K562 (cell line): ENCODE measurements at regions of chr6 and their contacts with region 1.

Region 1: DNA sequence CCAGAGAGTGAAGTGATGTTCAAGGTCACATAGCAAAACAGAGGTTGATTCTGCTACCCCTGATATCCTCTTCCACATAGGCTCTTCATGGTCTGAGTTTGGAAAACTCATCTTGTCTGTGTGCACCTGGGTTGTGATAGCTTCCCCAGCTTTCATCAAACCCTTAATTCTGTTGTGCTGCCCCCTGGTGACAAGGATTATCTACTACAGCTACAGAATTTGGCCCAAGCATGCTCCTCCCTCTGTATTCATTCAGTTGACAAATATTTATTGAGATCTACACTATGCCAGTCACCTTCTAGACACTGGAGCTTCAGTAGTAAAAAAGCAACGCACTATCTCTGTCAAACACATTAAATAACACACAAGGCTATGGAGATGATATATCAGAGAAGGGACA is 50.4 kb downstream of the SMPDL3A start:
- DNase-seq: peak; percentile 66 to 72 (median 70)
- ATAC-seq: peak; percentile 90
- H3K4me3 ChIP-seq: no peak overlapping the region
- H3K27ac ChIP-seq: no peak overlapping the region
- H3K4me1 ChIP-seq: no peaks in the 10 kb centered on the region
- H3K27me3 ChIP-seq: peaks cover 4 to 9% of the 10 kb centered on the region in 2 experiments; a peak in 3 of 5 replicates
- CTCF ChIP-seq: peak; percentile 61 to 76 (median 61)
- EP300 ChIP-seq: no peak
- POLR2A ChIP-seq: no peak
- RAD21 ChIP-seq: peak; percentile 44 to 67

Region 2: DNA sequence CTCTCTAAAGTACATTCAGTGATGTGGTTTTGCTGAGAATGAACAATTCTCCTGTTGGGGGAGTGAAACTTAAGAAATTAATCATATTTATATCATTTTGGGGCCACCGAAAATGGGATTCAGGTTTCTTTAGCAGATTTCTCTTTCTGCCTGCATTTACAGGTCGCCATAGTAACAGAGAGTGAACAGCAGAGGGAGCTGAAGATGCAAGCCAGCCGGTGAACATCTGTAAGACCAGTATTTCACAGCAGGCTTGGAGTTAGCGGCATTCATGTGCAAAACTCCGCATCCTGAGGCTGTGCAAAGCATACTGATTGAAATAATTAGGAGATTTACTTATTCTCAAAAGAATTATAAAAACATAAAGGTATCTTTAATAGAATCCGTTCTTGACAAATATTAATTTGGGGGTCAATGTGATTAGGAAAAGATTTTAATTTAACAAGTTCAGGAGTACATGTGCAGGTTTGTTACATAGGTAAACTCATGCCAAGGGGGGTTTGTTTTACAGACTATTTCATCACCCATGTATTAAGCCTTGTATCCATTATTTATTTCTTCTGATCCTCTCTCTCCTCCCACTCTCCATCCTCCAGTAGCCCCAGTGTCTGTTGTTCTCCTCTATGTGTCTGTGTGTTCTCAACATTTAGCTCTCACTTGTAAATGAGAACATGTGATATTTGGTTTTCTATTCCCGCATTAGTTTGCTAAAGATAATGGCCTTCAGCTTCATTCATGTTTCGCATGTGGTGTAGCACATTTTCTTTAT is 457.8 kb before region 1 on chr6:
- CTCF ChIA-PET with region 1: interaction called, 4 read pairs
- POLR2A ChIA-PET with region 1: no interaction called
- in situ Hi-C with region 1: no loop called
- intact Hi-C with region 1: loop called (anchors 5 kb)
- DNase-seq: peak; percentile 56 to 77 (median 58)
- ATAC-seq: peak; percentile 99
- H3K4me3 ChIP-seq: no peak overlapping the region
- H3K27ac ChIP-seq: no peak overlapping the region
- H3K4me1 ChIP-seq: no peaks in the 10 kb centered on the region
- H3K27me3 ChIP-seq: no peaks in the 10 kb centered on the region
- CTCF ChIP-seq: peak; percentile 70 to 78 (median 78)
- EP300 ChIP-seq: no peak
- POLR2A ChIP-seq: no peak
- RAD21 ChIP-seq: peak; percentile 70 to 85

Region 3: DNA sequence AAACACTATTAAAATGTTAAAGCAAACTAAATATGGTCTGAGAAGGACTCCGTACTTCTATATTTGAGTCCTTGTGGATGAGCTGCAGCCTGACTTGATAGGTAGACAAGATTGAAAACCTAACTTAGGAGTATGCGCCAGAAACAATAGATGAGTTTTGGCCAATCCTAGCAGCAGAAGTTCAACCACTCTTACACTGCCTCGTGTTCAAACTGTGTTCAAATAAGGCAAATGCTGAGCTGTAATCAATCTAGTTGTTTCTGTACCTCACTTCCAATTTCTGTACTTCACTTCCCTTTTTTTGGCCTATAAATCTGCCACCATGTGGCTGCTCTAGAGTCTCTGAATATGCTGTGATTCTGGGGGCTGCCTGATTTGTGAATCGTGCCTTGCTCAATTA is 354.7 kb before region 1 on chr6:
- CTCF ChIA-PET with region 1: no interaction called
- POLR2A ChIA-PET with region 1: no interaction called
- in situ Hi-C with region 1: loop called (anchors 10 kb)
- intact Hi-C with region 1: no loop called
- DNase-seq: peak in 2 of 4 experiments; percentile 9 to 51
- ATAC-seq: peak; percentile 68
- H3K4me3 ChIP-seq: no peak overlapping the region
- H3K27ac ChIP-seq: no peak overlapping the region
- H3K4me1 ChIP-seq: no peaks in the 10 kb centered on the region
- H3K27me3 ChIP-seq: no peaks in the 10 kb centered on the region
- CTCF ChIP-seq: peak in 1 of 3 experiments; percentile 5; a peak in 1 of 6 replicates
- EP300 ChIP-seq: peak; percentile 25; the same call in 1 of the 2 replicates
- POLR2A ChIP-seq: no peak
- RAD21 ChIP-seq: no peak

Region 4: DNA sequence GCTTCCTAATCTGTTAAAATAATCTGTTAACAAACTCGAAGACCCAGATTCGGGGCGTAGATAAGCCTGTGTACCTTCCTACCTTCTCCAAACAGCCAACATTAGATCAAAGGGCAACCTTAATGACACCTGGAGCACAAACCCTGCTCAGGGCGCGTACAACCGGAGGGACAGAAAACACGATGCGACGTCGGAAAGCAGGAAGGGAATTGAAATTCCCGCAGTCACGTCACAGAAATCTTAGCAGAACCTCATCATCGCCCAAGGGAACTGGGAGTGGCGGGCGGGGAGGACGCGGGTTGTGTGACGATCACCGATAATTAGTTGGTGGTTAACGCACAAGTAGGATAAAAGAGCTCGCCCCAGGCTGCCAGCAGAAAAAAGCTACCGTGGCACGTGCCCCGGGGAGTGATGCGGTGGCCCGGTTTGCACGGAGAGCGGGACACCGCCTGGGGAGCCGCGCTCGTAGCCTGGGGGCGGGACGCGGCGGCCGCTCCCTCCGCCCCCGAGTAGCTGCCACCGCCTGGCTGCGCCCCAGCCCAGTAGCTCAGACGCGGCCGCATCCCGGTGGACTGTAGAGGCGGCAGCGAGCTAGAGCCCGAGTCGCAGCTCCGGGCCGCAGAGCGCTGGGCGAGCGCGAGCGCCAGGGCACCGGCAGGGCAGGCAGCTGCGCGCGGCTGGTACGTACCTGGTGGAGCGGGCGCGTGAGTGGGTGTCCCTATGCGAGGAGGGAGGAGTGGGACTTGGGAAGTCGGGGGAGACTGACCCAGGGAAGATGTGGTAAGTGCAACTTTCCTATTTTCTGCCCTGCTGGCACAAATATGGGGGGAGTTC is 229.4 kb before region 1 on chr6 and contains the start of gene PKIB:
- CTCF ChIA-PET with region 1: no interaction called
- POLR2A ChIA-PET with region 1: no interaction called
- in situ Hi-C with region 1: no loop called
- intact Hi-C with region 1: loop called (anchors 5 kb)
- DNase-seq: peak; percentile 22 to 56 (median 38)
- ATAC-seq: peak; percentile 99
- H3K4me3 ChIP-seq: peak within 1 kb of the TSS; percentile 30
- H3K27ac ChIP-seq: no peak within 1 kb of the TSS
- H3K4me1 ChIP-seq: peaks cover 2 to 13% of the 10 kb centered on the region in 2 experiments; a peak in 3 of 5 replicates
- H3K27me3 ChIP-seq: no peaks in the 10 kb centered on the region; a peak in 1 of 5 replicates
- CTCF ChIP-seq: peak; percentile 33 to 92 (median 37); a peak in 4 of 6 replicates
- EP300 ChIP-seq: no peak
- POLR2A ChIP-seq: no peak
- RAD21 ChIP-seq: 0 out of 4 replicates have a peak, but pooled peaks of 1 of the 2 experiments have one; percentile 11
- polyA plus RNA-seq, gene PKIB: 26.6 to 27.4 TPM

Region 5: DNA sequence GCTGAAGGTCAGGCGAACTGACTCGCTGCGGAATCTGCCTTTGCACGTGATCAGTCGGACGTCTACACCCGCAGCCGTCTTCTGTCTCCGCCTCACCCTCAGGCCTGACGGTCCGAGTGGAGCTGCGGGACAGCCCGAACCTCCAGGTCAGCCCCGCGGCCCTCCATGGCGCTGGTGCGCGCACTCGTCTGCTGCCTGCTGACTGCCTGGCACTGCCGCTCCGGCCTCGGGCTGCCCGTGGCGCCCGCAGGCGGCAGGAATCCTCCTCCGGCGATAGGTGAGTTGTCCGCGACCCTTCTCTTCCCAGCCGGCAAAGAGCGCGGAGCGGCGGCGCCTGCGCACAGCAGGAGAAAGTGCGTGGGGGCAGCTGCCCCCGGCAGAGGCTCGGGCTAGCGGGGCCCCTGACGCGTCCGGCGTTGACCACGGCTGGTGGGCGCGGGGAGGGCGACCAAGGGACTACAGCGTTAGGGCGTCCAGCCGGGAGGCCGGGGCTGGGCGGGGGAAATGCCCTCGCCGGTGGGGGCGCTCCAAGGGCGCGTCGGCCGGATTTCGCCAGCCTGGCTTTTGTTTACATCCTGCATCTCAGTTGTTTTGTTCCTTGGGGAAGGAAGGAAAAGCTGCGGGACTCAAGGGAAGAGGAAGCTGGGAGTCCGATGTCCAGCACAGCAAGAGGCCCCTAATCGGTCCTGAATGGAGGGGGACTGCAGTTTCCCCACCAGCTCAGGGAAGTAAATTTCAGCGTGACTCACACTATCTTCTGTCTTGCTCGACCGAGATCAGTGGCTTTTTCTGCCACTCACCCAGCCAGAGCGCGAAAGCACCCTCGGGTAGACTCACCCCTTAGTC is 50.1 kb before region 1 on chr6 and contains the start of gene SMPDL3A:
- CTCF ChIA-PET with region 1: no interaction called
- POLR2A ChIA-PET with region 1: no interaction called
- in situ Hi-C with region 1: no loop called
- intact Hi-C with region 1: loop called (anchors 2 kb)
- DNase-seq: peak; percentile 55 to 63 (median 58)
- ATAC-seq: peak; percentile 89
- H3K4me3 ChIP-seq: peak within 1 kb of the TSS; percentile 70
- H3K27ac ChIP-seq: peak within 1 kb of the TSS; percentile 39
- H3K4me1 ChIP-seq: peaks cover 6 to 9% of the 10 kb centered on the region in 2 experiments; a peak in 4 of 5 replicates
- H3K27me3 ChIP-seq: peaks cover 2 to 11% of the 10 kb centered on the region in 2 experiments; a peak in 3 of 5 replicates
- CTCF ChIP-seq: peak; percentile 28 to 54 (median 40); a peak in 4 of 6 replicates
- EP300 ChIP-seq: no peak
- POLR2A ChIP-seq: 0 out of 2 replicates have a peak, but pooled peaks have one; percentile 31
- RAD21 ChIP-seq: no peak
- polyA plus RNA-seq, gene SMPDL3A: 0.14 to 0.27 TPM